Ascending aorta (tissue), 2 donors: ENCODE measurements at regions of chr13 and their contacts with region 1.

Region 1: GRCh38 chr13:43905435-43906031 is 25.8 kb downstream of the LACC1 start:
- DNase-seq: no peak
- H3K4me3 ChIP-seq: no peak overlapping the region
- H3K27ac ChIP-seq: no peak overlapping the region
- H3K4me1 ChIP-seq: no peaks in the 10 kb centered on the region
- H3K27me3 ChIP-seq: no peaks in the 10 kb centered on the region
- CTCF ChIP-seq: peak; percentile 74 to 87 (median 79)

Region 2: GRCh38 chr13:43751624-43752023 is 153.9 kb before region 1 on chr13:
- intact Hi-C with region 1: no loop called
- DNase-seq: no peak
- H3K4me3 ChIP-seq: no peak overlapping the region
- H3K27ac ChIP-seq: no peak overlapping the region
- H3K4me1 ChIP-seq: no peaks in the 10 kb centered on the region
- H3K27me3 ChIP-seq: no peaks in the 10 kb centered on the region
- CTCF ChIP-seq: no peak

Region 3: GRCh38 chr13:44191504-44192171 is 286.1 kb after region 1 on chr13:
- intact Hi-C with region 1: loop called (anchors 10 kb)
- DNase-seq: peak in 1 of 2 donors; percentile 77
- H3K4me3 ChIP-seq: peak overlapping the region; percentile 24 to 39
- H3K27ac ChIP-seq: peak overlapping the region in 1 of 2 donors; percentile 1
- H3K4me1 ChIP-seq: peaks cover 0 to 2% of the 10 kb centered on the region in 2 donors
- H3K27me3 ChIP-seq: no peaks in the 10 kb centered on the region
- CTCF ChIP-seq: peak; percentile 64 to 84 (median 83)

Region 4: GRCh38 chr13:44470638-44471562 is 565.4 kb after region 1 on chr13:
- intact Hi-C with region 1: loop called (anchors 5 kb)
- DNase-seq: no peak
- H3K4me3 ChIP-seq: no peak overlapping the region
- H3K27ac ChIP-seq: peak overlapping the region in 1 of 2 donors; percentile 5
- H3K4me1 ChIP-seq: peaks cover 0 to 14% of the 10 kb centered on the region in 2 donors
- H3K27me3 ChIP-seq: no peaks in the 10 kb centered on the region
- CTCF ChIP-seq: peak; percentile 36 to 57 (median 37)